ENCODE measurements at regions of chr4 and their contacts with region 1.

Region 1: GRCh38 chr4:6087673-6088341 is 69.6 kb upstream of the C4orf50 start:
- DNase-seq: peak; percentile 65 to 86 (median 78)
- ATAC-seq: peak; percentile 89 to 99 (median 97)
- H3K4me3 ChIP-seq: no peak overlapping the region
- H3K27ac ChIP-seq: no peak overlapping the region
- H3K4me1 ChIP-seq: peaks cover 0 to 3% (median 0%) of the 10 kb centered on the region in 4 donors
- H3K27me3 ChIP-seq: no peaks in the 10 kb centered on the region
- CTCF ChIP-seq: peak; percentile 62 to 83 (median 80)
- POLR2A ChIP-seq: no peak

Region 2: DNA sequence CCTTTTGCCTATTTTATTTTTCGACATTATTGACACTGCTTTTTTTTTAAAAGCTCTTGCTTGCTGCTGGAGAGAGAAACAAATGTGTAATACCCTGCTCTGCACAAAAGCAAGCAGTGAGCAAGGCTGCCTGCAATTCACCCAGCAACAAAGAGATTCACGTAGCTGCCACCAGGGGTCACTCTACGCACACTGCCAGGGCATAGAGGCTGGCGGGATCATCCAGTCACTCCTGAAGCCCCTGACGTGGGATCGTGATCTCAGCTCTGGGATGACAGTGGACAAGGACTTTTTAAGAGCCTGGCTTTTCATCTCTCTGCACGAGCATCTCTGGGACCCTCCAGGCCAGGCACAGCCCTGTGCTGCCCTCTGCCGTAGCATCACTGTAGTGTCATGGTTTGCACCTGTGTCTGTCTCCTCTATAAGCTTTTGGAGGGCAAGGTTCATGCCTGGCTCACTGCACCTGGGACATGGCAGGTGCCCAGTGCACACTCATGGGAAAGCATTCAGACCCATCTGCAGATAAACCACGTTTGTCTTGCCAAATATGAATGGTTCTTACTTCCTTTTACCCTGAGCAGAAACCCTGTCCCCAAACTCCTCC is 89.4 kb before region 1 on chr4:
- intact Hi-C with region 1: loop called in 1 of 2 experiments (anchors 5 kb)
- DNase-seq: peak in 2 of 3 donors; percentile 49 to 58
- ATAC-seq: peak; percentile 85 to 96 (median 90)
- H3K4me3 ChIP-seq: no peak overlapping the region
- H3K27ac ChIP-seq: no peak overlapping the region
- H3K4me1 ChIP-seq: no peaks in the 10 kb centered on the region
- H3K27me3 ChIP-seq: no peaks in the 10 kb centered on the region
- CTCF ChIP-seq: peak; percentile 82 to 96 (median 94)
- POLR2A ChIP-seq: no peak

Region 3: GRCh38 chr4:6032249-6033244 is 55.3 kb before region 1 on chr4:
- intact Hi-C with region 1: loop called in 1 of 2 experiments (anchors 10 kb)
- DNase-seq: peak in 1 of 3 donors; percentile 82
- ATAC-seq: peak; percentile 82 to 98 (median 95)
- H3K4me3 ChIP-seq: no peak overlapping the region
- H3K27ac ChIP-seq: peak overlapping the region in 1 of 3 donors; percentile 53
- H3K4me1 ChIP-seq: peaks cover 0 to 11% (median 0%) of the 10 kb centered on the region in 4 donors
- H3K27me3 ChIP-seq: no peaks in the 10 kb centered on the region
- CTCF ChIP-seq: peak; percentile 34 to 63 (median 40)
- POLR2A ChIP-seq: no peak